Dorsolateral prefrontal cortex (tissue), 120 donors: ENCODE measurements at regions of chr11 and their contacts with region 1.

Region 1: GRCh38 chr11:85854557-85855340 is 434 bp upstream of the CCDC83 start:
- DNase-seq: peak; percentile 75 to 91 (median 80)
- H3K4me3 ChIP-seq: peak overlapping the region; percentile 37 to 91 (median 68)
- H3K27ac ChIP-seq: peak overlapping the region in 55 of 59 donors; percentile 40 to 97 (median 84)
- H3K27me3 ChIP-seq: no peaks in the 10 kb centered on the region
- CTCF ChIP-seq: peak; percentile 86 to 99 (median 94)

Region 2: DNA sequence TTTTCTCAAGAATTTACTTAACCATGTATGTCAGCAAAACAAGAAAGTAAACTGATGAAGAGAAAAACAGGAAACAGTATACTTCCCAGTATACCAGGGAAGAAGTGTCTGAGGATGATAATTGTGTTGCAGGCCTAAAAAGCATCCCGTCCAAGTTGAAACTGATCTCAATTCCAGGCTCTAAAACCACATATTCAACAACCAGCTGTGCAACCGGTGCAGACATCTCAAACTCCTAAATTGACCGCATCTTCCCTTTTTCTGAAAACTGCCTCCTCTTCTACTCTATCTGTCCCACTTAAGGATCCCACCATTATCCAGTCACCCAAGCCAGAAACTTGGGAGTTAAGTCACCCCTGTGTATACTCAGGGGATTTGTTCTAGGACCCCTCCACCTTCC is 47.6 kb after region 1 on chr11:
- intact Hi-C with region 1: no loop called
- DNase-seq: no peak
- H3K4me3 ChIP-seq: no peak overlapping the region
- H3K27ac ChIP-seq: no peak overlapping the region
- H3K27me3 ChIP-seq: no peaks in the 10 kb centered on the region
- CTCF ChIP-seq: no peak

Region 3: GRCh38 chr11:85941380-85941973 is 86.7 kb after region 1 on chr11:
- intact Hi-C with region 1: loop called (anchors 5 to 10 kb)
- DNase-seq: peak in 9 of 10 donors; percentile 36 to 72 (median 60)
- H3K4me3 ChIP-seq: no peak overlapping the region
- H3K27ac ChIP-seq: no peak overlapping the region
- H3K27me3 ChIP-seq: no peaks in the 10 kb centered on the region
- CTCF ChIP-seq: peak; percentile 55 to 92 (median 79)

Region 4: GRCh38 chr11:86056351-86056854 is 201.7 kb after region 1 on chr11:
- intact Hi-C with region 1: loop called in 1 of 2 experiments (anchors 10 kb)
- DNase-seq: no peak
- H3K4me3 ChIP-seq: no peak overlapping the region
- H3K27ac ChIP-seq: peak overlapping the region in 8 of 59 donors; percentile 6 to 43 (median 14)
- H3K27me3 ChIP-seq: no peaks in the 10 kb centered on the region
- CTCF ChIP-seq: peak in 7 of 56 donors; percentile 9 to 20 (median 14)

Region 5: DNA sequence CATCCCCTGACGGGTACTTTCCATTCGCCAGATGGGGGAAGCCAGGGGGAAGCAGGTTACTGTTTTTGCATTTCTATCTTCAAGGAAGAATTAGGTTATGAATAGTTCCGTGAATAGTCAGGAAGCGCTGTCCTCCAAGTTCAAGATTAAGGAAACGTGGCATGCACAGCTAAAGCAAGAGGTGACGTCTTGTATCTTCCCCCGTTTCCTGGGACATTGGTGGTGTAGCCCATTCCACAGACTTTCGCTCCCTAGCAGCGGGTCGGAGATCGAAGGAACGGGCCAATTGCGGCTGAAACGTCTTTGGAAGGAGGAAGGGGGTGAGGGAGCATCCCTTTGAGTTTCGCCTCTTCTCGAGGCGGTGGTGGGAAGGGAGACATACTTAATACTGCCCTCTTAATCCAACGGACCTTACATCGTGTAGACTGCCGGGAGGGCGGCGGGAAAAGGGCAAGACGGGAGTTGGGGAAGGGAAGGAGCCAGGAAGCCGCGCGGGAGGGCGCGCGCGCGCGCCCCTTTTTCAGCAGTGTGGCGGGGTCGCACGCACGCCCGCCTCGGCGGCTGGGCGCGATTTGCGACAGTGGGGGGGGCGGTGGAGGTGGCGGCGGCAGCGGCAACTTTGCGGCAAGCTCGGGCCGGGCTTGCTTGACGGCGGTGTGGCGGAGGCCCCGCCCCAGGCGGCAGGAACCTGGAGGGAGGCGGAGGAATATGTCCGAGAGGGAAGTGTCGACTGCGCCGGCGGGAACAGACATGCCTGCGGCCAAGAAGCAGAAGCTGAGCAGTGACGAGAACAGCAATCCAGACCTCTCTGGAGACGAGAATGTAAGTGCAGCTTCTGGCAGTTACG is 390.0 kb after region 1 on chr11 and contains the start of gene EED:
- intact Hi-C with region 1: loop called in 1 of 2 experiments (anchors 10 kb)
- DNase-seq: peak; percentile 83 to 96 (median 92)
- H3K4me3 ChIP-seq: peak within 1 kb of the TSS; percentile 63 to 98 (median 82)
- H3K27ac ChIP-seq: peak within 1 kb of the TSS; percentile 90 to 100 (median 99)
- H3K27me3 ChIP-seq: peaks cover 0 to 5% (median 0%) of the 10 kb centered on the region in 45 donors
- CTCF ChIP-seq: peak in 26 of 56 donors; percentile 3 to 38 (median 14)
- total RNA-seq, gene EED: 19.7 to 40.3 (median 29.2) TPM

Region 6: DNA sequence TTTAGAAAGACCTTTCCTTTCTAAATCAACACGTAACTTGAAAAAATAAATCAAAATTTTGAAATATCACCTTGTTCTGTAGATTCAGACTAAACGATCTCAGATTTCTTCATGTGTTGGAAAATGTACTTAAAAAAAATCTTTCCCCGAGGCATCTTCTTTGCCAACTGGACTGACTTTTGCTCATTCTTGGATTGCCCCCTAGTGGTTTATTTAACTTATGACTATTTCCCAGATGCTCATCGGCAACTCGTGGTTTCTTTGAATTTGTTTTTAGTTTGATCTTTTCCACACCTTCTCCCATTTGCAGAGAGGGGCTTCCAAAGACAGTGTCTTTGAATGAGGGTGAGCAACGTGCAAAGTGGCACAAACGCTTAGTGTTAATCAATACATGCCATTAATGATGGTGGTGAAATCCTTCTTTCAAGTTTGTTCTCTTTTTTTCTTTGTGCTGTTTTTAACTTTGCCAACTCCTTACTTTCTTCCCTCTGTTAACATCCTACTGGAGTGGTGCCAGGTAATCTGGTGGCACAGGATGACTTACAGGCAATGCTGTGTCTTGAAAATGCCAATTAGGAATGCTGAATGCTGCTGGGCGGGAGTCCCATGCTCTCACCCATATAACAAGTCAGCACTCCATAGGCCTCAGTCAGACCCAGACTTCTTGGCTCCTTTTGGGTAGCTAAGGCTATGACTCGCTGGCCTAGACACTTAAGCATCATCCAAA is 963.9 kb after region 1 on chr11:
- intact Hi-C with region 1: loop called in 1 of 2 experiments (anchors 5 kb)
- DNase-seq: peak in 1 of 10 donors; percentile 7
- H3K4me3 ChIP-seq: peak overlapping the region in 2 of 59 donors; percentile 1 to 2
- H3K27ac ChIP-seq: no peak overlapping the region
- H3K27me3 ChIP-seq: peaks cover 0 to 13% (median 0%) of the 10 kb centered on the region in 45 donors
- CTCF ChIP-seq: peak; percentile 79 to 96 (median 90)